ENCODE measurements at regions of chr6 and their contacts with region 1.

Region 1: GRCh38 chr6:110815217-110816109 is at the start of gene CDK19:
- DNase-seq: peak; percentile 96 to 99 (median 98)
- ATAC-seq: peak; percentile 81
- H3K4me3 ChIP-seq: peak within 1 kb of the TSS; percentile 83 to 89
- H3K4me3 Mint-ChIP-seq: peak within 1 kb of the TSS; percentile 98
- H3K27ac ChIP-seq: peak within 1 kb of the TSS; percentile 88 to 95
- H3K27ac Mint-ChIP-seq: peak within 1 kb of the TSS; percentile 99
- H3K4me1 ChIP-seq: peaks cover 12% of the 10 kb centered on the region
- H3K4me1 Mint-ChIP-seq: peaks cover 23% of the 10 kb centered on the region
- H3K27me3 ChIP-seq: no peaks in the 10 kb centered on the region
- H3K27me3 Mint-ChIP-seq: no peaks in the 10 kb centered on the region
- CTCF ChIP-seq: no peak
- total RNA-seq, gene CDK19: 4.9 to 5.0 TPM

Region 2: GRCh38 chr6:109482905-109483735 is 1332.3 kb before region 1 on chr6 and contains the start of gene ZBTB24:
- CTCF ChIA-PET with region 1: no interaction called
- POLR2A ChIA-PET with region 1: interaction called, 4 read pairs
- intact Hi-C with region 1: loop called in 1 of 2 experiments (anchors 2 kb)
- DNase-seq: peak; percentile 75 to 96 (median 88)
- ATAC-seq: peak; percentile 85
- H3K4me3 ChIP-seq: peak within 1 kb of the TSS; percentile 65 to 69
- H3K4me3 Mint-ChIP-seq: peak within 1 kb of the TSS; percentile 95
- H3K27ac ChIP-seq: peak within 1 kb of the TSS; percentile 49 to 62
- H3K27ac Mint-ChIP-seq: peak within 1 kb of the TSS; percentile 89
- H3K4me1 ChIP-seq: peaks cover 37% of the 10 kb centered on the region
- H3K4me1 Mint-ChIP-seq: peaks cover 50% of the 10 kb centered on the region
- H3K27me3 ChIP-seq: no peaks in the 10 kb centered on the region
- H3K27me3 Mint-ChIP-seq: no peaks in the 10 kb centered on the region
- CTCF ChIP-seq: no peak
- total RNA-seq, gene ZBTB24: 10.9 to 11.2 TPM

Region 3: DNA sequence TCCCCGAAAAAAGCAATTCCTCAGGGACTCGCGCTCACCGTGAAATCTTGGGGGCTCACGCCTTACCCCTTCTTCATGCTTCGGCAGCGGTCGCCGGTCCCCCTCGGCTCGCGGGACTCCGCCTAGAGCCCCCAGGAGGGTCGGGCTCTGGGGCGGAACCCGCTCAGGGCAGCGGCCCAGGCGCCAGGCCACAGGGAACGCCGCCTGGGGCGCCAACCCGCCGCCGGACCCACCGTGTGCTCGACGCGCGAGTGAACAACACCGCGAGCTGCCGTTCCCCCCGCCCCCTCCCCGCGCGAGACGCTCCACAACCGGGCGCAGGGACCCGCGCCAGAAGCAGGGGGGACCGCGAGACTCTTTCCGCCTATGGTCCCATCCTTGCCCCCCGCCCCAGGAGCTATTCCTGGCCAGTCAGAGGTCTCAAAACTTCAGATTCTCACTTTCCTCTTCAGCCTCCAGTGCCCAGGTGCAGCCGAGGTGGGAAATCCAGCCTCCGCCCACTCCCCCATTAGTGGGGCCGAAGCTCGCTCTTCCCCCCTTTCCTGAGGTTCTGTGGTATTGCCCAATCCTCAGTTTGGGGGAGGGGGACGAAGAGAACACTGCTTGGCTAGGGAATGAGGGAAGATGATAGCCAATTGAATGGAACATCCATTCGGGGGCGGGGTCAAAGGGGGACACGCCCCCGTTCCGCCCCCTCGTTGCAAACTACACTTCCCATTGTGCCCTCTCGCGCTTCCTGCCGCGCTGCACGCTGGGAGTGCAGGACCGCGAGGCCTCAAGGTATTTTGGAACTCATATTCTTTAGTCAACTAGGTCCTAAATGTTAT is 635.8 kb before region 1 on chr6 and contains the start of gene WASF1:
- CTCF ChIA-PET with region 1: no interaction called
- POLR2A ChIA-PET with region 1: interaction called, 4 read pairs
- intact Hi-C with region 1: loop called in 1 of 2 experiments (anchors 5 kb)
- DNase-seq: peak; percentile 77 to 95 (median 89)
- ATAC-seq: peak; percentile 84
- H3K4me3 ChIP-seq: peak within 1 kb of the TSS; percentile 83 to 96
- H3K4me3 Mint-ChIP-seq: peak within 1 kb of the TSS; percentile 77
- H3K27ac ChIP-seq: peak within 1 kb of the TSS; percentile 72 to 79
- H3K27ac Mint-ChIP-seq: peak within 1 kb of the TSS; percentile 38
- H3K4me1 ChIP-seq: peaks cover 28% of the 10 kb centered on the region
- H3K4me1 Mint-ChIP-seq: peaks cover 7% of the 10 kb centered on the region
- H3K27me3 ChIP-seq: no peaks in the 10 kb centered on the region
- H3K27me3 Mint-ChIP-seq: peaks cover 9% of the 10 kb centered on the region
- CTCF ChIP-seq: no peak
- total RNA-seq, gene WASF1: 1.1 to 1.7 TPM

Region 4: DNA sequence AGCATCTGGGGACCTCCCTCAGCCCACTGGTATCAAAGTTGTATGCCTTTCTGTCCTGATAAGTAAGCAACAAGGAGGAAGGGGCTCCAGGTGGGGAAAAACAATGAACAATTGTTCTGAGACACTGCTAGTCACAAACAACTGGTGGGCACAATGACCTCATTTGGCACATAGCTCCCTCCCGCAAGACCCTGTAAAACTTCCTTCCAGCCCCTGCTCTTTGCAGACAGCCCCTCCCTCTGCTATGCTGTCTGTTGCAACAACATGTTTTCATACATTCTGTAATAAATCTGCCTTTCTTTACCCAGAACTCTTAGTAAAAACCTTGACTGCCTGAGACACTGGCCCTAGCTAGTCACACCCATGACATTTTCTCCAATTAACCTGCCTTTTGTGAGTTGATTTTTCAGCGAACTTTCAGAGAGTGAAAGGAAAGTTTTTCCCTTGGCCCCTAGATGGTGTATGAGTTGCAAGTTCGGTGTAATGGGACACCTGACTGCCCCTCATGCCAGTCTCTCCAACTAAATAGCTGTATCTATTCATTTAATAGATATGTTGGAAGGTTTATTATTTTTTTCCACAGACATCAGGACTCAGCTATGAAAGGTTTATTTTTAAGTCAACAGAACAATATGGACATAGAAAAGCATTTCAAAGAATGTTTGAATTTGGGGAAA is 196.7 kb before region 1 on chr6:
- CTCF ChIA-PET with region 1: no interaction called
- POLR2A ChIA-PET with region 1: no interaction called
- intact Hi-C with region 1: no loop called
- DNase-seq: no peak
- ATAC-seq: no peak
- H3K4me3 ChIP-seq: no peak overlapping the region
- H3K4me3 Mint-ChIP-seq: no peak overlapping the region
- H3K27ac ChIP-seq: no peak overlapping the region
- H3K27ac Mint-ChIP-seq: no peak overlapping the region
- H3K4me1 ChIP-seq: no peaks in the 10 kb centered on the region
- H3K4me1 Mint-ChIP-seq: no peaks in the 10 kb centered on the region
- H3K27me3 ChIP-seq: no peaks in the 10 kb centered on the region
- H3K27me3 Mint-ChIP-seq: no peaks in the 10 kb centered on the region
- CTCF ChIP-seq: no peak

Region 5: GRCh38 chr6:110784610-110784979 is 30.9 kb before region 1 on chr6:
- CTCF ChIA-PET with region 1: no interaction called
- POLR2A ChIA-PET with region 1: no interaction called
- intact Hi-C with region 1: no loop called
- DNase-seq: no peak
- ATAC-seq: no peak
- H3K4me3 ChIP-seq: no peak overlapping the region
- H3K4me3 Mint-ChIP-seq: no peak overlapping the region
- H3K27ac ChIP-seq: no peak overlapping the region
- H3K27ac Mint-ChIP-seq: no peak overlapping the region
- H3K4me1 ChIP-seq: no peaks in the 10 kb centered on the region
- H3K4me1 Mint-ChIP-seq: peaks cover 25% of the 10 kb centered on the region
- H3K27me3 ChIP-seq: no peaks in the 10 kb centered on the region
- H3K27me3 Mint-ChIP-seq: no peaks in the 10 kb centered on the region
- CTCF ChIP-seq: no peak

Region 6: DNA sequence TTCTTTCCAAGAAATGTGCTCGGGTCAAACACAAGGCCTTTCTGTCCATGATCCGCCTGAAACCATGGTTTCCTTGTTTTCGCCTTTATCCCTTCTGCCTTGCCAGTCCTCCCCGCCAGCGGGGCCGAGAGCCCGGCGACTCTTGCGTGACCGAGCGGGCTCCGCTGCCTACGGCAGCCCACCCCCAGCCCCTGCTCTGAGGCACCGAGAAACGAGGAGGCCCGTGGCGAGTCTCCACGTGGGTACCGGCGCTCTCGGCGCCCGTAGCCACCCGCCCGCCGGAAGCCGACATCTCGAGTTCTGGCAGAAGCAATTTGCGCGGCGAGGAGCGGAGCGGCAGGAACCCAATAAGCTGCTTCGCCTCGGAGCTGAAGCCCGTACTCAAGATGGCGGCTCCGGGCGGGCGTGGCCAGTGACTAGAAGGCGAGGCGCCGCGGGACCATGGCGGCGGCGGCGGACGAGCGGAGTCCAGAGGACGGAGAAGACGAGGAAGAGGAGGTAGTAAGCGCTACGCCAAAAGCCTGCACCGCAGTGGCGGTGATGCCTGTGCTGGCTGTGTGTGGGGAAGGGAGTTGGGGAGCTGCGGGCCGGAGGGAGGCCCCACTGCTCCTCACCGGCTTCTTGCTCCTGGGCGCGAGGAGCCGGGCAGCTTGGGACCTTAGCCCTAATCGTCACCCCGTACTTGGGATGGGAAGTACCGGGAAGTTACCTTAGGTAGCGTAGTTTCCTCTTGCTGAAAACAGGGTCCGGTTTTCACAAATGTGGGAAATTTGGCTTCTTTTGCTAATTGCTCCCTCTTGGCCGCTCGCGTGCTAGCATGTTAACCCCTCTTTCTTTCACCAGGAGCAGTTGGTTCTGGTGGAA is 143.1 kb after region 1 on chr6 and contains the start of gene GTF3C6:
- CTCF ChIA-PET with region 1: interaction called, 3 read pairs
- POLR2A ChIA-PET with region 1: interaction called, 18 read pairs
- intact Hi-C with region 1: loop called (anchors 1 kb)
- DNase-seq: peak; percentile 81 to 95 (median 93)
- ATAC-seq: peak; percentile 99
- H3K4me3 ChIP-seq: peak within 1 kb of the TSS; percentile 97 to 99
- H3K4me3 Mint-ChIP-seq: peak within 1 kb of the TSS; percentile 100
- H3K27ac ChIP-seq: peak within 1 kb of the TSS; percentile 91 to 92
- H3K27ac Mint-ChIP-seq: peak within 1 kb of the TSS; percentile 100
- H3K4me1 ChIP-seq: peaks cover 5% of the 10 kb centered on the region
- H3K4me1 Mint-ChIP-seq: peaks cover 21% of the 10 kb centered on the region
- H3K27me3 ChIP-seq: no peaks in the 10 kb centered on the region
- H3K27me3 Mint-ChIP-seq: peaks cover 5% of the 10 kb centered on the region
- CTCF ChIP-seq: no peak
- total RNA-seq, gene GTF3C6: 25.0 to 26.3 TPM

Region 7: DNA sequence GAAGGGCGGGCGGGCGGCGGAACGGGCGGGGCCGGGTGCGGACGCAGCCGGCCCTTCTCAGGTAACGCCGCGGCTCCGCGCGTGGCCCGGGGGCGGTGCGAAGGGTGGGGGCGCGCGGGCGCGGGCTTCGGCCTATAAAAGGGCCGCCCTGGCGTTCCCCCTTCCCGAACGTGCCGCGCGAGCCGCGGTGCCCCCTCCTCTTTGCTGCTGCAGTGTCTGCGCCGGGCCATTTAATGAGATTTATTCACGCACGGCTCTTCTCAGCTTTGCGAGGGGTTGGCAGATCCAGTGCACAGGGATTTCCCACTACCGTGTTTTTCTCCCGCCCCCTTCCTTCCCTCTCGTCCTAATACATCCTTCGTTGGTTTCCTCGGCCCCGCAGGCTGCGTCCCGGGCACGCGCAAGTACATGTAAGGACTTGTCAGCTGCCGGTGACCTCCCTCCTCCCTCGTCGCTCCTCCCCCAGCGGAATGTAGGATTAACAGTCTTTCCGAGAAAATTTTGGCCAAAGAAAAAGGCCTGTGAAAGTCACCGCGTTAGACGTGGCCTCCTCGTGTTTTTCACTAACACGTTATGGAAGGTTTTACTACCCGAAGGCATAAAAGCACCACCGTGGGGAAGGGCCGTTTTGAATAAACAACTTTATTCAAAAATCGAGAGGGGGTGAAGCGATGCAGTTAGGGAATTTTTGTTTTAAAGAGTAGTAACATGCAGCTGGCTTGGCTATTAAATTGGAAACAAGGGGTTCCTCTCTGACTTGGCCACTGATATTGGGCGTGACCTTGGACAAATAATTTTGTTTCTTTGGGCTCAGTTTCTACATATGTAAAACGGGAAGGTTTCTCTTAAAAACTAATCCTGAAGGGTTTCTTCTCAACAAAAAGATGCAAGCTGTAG is 668.5 kb after region 1 on chr6:
- CTCF ChIA-PET with region 1: no interaction called
- POLR2A ChIA-PET with region 1: interaction called, 3 read pairs
- intact Hi-C with region 1: loop called in 1 of 2 experiments (anchors 10 kb)
- DNase-seq: peak in 6 of 9 experiments; percentile 56 to 93 (median 78)
- ATAC-seq: peak; percentile 24
- H3K4me3 ChIP-seq: peak overlapping the region; percentile 88 to 92
- H3K4me3 Mint-ChIP-seq: peak overlapping the region; percentile 99
- H3K27ac ChIP-seq: peak overlapping the region; percentile 89 to 91
- H3K27ac Mint-ChIP-seq: peak overlapping the region; percentile 99
- H3K4me1 ChIP-seq: peaks cover 12% of the 10 kb centered on the region
- H3K4me1 Mint-ChIP-seq: peaks cover 45% of the 10 kb centered on the region
- H3K27me3 ChIP-seq: no peaks in the 10 kb centered on the region
- H3K27me3 Mint-ChIP-seq: no peaks in the 10 kb centered on the region
- CTCF ChIP-seq: no peak

Region 8: GRCh38 chr6:112087136-112087911 is 1271.9 kb after region 1 on chr6 and contains the starts of genes FAM229B and TUBE1:
- CTCF ChIA-PET with region 1: no interaction called
- POLR2A ChIA-PET with region 1: interaction called, 3 read pairs
- intact Hi-C with region 1: loop called in 1 of 2 experiments (anchors 1 kb)
- DNase-seq: peak; percentile 82 to 97 (median 89)
- ATAC-seq: peak; percentile 97
- H3K4me3 ChIP-seq: peak within 1 kb of the TSS; percentile 75 to 80
- H3K4me3 Mint-ChIP-seq: no peak within 1 kb of the TSS
- H3K27ac ChIP-seq: peak within 1 kb of the TSS; percentile 89 to 97
- H3K27ac Mint-ChIP-seq: no peak within 1 kb of the TSS
- H3K4me1 ChIP-seq: peaks cover 9% of the 10 kb centered on the region
- H3K4me1 Mint-ChIP-seq: peaks cover 12% of the 10 kb centered on the region
- H3K27me3 ChIP-seq: no peaks in the 10 kb centered on the region
- H3K27me3 Mint-ChIP-seq: peaks cover 3% of the 10 kb centered on the region
- CTCF ChIP-seq: no peak
- total RNA-seq, gene FAM229B: 3.1 to 3.3 TPM
- total RNA-seq, gene TUBE1: 25.6 to 30.5 TPM